PC-9 (cell line): ENCODE measurements at regions of chrX and their contacts with region 1.

Region 1: GRCh38 chrX:116204932-116205331 is 34.4 kb downstream of the AGTR2 start:
- DNase-seq: no peak
- H3K4me3 ChIP-seq: no peak overlapping the region
- H3K27ac ChIP-seq: no peak overlapping the region
- H3K4me1 ChIP-seq: no peaks in the 10 kb centered on the region
- H3K27me3 ChIP-seq: no peaks in the 10 kb centered on the region
- CTCF ChIP-seq: peak; percentile 97

Region 2: DNA sequence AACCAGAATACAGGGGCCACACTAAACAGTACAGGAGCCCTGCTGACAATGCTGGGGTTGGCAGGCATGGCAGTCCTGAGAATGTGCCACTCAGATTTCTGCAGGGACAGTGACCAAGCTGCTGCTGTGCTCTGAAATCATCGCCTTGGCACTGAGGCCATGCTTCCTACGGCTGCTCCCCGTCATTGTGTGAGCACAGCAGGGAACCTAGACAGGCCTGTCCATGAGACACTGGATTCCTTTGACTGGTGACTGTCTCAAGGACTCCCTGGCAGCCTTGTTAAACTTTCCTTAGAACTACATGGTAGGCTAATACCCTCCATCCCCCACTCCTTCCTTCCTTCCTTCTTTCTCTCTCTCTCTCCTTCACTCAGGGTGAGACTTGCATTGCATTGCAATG is 804.0 kb before region 1 on chrX:
- CTCF ChIA-PET with region 1: no interaction called
- POLR2A ChIA-PET with region 1: no interaction called
- intact Hi-C with region 1: no loop called
- DNase-seq: peak in 1 of 2 experiments; percentile 16
- H3K4me3 ChIP-seq: no peak overlapping the region
- H3K27ac ChIP-seq: no peak overlapping the region
- H3K4me1 ChIP-seq: no peaks in the 10 kb centered on the region
- H3K27me3 ChIP-seq: no peaks in the 10 kb centered on the region
- CTCF ChIP-seq: no peak

Region 3: GRCh38 chrX:116194649-116195048 is 10.3 kb before region 1 on chrX:
- CTCF ChIA-PET with region 1: no interaction called
- POLR2A ChIA-PET with region 1: no interaction called
- intact Hi-C with region 1: no loop called
- DNase-seq: no peak
- H3K4me3 ChIP-seq: no peak overlapping the region
- H3K27ac ChIP-seq: no peak overlapping the region
- H3K4me1 ChIP-seq: no peaks in the 10 kb centered on the region
- H3K27me3 ChIP-seq: no peaks in the 10 kb centered on the region
- CTCF ChIP-seq: no peak

Region 4: GRCh38 chrX:116272328-116272727 is 67.4 kb after region 1 on chrX:
- CTCF ChIA-PET with region 1: no interaction called
- POLR2A ChIA-PET with region 1: no interaction called
- intact Hi-C with region 1: loop called (anchors 2 kb)
- DNase-seq: peak; percentile 61 to 95
- H3K4me3 ChIP-seq: 0 out of 2 replicates have a peak overlapping the region, but pooled peaks have one; percentile 16
- H3K27ac ChIP-seq: peak overlapping the region; percentile 95
- H3K4me1 ChIP-seq: peaks cover 20% of the 10 kb centered on the region
- H3K27me3 ChIP-seq: no peaks in the 10 kb centered on the region
- CTCF ChIP-seq: no peak

Region 5: DNA sequence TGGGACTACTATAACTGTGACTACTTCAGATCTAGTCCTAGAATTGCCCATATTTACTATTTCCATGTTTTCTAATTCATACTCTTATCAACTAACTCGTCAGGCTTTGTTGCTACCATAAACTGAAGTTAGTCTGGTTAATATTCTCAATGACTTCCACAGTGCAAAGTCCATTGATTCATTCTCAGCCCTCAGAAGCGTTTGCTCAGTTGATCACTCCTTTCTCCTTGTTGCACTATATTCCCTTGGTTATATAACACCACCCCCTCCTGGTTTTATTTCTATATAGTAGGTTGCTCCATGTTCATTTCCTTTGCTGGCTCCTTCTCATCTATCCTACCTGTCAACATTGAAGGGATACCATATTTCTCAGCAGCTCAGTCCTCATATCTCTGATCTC is 204.3 kb after region 1 on chrX:
- CTCF ChIA-PET with region 1: no interaction called
- POLR2A ChIA-PET with region 1: no interaction called
- intact Hi-C with region 1: no loop called
- DNase-seq: no peak
- H3K4me3 ChIP-seq: no peak overlapping the region
- H3K27ac ChIP-seq: no peak overlapping the region
- H3K4me1 ChIP-seq: no peaks in the 10 kb centered on the region
- H3K27me3 ChIP-seq: no peaks in the 10 kb centered on the region
- CTCF ChIP-seq: no peak

Region 6: DNA sequence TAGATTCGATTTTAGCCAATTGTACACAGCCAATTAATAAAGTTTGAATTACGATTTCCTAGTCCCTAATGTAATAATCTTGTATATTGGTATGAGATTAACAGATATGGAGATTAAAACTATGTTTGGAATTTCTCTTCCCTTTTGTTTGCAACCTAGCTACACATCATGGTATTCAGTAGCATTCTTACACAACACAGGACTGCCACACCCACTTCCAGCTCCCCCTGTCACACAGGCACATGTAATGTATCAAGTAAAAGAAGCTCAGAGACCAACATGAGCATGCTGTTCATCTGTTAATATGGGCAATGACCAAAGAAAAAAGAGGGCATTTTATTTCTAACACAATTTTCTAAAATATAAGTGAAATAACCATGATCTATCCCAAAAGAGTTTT is 244.2 kb after region 1 on chrX:
- CTCF ChIA-PET with region 1: no interaction called
- POLR2A ChIA-PET with region 1: no interaction called
- intact Hi-C with region 1: loop called (anchors 5 kb)
- DNase-seq: peak; percentile 30 to 47
- H3K4me3 ChIP-seq: no peak overlapping the region
- H3K27ac ChIP-seq: no peak overlapping the region
- H3K4me1 ChIP-seq: no peaks in the 10 kb centered on the region
- H3K27me3 ChIP-seq: no peaks in the 10 kb centered on the region
- CTCF ChIP-seq: no peak

Region 7: DNA sequence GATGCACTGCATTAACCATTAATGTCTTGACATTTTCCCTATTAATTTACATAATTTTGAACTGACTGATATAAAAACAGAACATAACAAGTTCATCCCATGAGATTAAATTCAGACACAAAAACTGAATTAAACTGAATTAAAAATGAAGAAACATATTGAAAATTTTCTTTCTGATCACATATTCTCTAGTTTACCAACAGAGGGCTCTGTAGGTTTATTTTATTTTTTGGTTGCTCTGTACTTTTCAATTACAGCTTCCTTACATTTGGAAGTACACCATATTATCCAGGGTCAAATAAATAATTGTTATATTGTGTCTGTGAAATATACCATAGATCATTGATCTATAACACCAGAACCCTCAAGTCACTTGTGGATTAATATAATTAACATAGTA is 285.2 kb after region 1 on chrX:
- CTCF ChIA-PET with region 1: no interaction called
- POLR2A ChIA-PET with region 1: no interaction called
- intact Hi-C with region 1: loop called (anchors 5 kb)
- DNase-seq: no peak
- H3K4me3 ChIP-seq: no peak overlapping the region
- H3K27ac ChIP-seq: no peak overlapping the region
- H3K4me1 ChIP-seq: no peaks in the 10 kb centered on the region
- H3K27me3 ChIP-seq: no peaks in the 10 kb centered on the region
- CTCF ChIP-seq: peak; percentile 69

Region 8: DNA sequence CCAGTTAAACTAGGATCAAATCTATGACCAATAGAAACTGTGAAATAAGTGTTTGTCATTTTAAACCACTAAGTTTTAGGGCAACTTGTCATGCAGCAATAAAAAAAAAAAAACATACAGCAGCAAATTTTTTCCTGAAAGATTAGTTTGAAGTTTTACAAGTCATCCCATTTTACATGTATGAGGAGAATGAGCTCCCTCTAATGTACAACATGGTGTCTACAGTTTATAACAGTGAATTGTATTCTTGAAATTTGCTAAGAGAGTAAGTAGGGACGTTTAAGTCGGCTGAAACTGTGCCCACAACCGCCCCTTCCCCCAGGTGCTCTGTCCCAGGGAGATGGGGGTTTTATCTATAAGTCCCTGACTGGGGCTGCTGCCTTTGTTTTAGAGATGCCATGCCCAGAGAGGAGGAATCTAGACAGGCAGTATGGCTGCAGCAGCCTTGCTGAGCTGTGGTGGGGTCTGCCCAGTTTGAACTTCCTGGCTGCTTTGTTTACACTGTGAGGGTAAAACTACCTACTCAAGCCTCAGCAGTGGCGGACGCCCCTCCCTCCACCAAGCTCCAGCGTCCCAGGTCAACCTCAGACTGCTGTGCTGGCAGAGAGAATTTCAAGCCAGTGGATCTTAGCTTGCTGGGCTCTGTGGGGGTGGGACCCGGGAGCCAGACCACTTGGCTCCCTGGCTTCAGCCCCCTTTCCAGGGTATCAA is 757.1 kb after region 1 on chrX:
- CTCF ChIA-PET with region 1: no interaction called
- POLR2A ChIA-PET with region 1: no interaction called
- intact Hi-C with region 1: loop called (anchors 1 kb)
- DNase-seq: no peak
- H3K4me3 ChIP-seq: no peak overlapping the region
- H3K27ac ChIP-seq: no peak overlapping the region
- H3K4me1 ChIP-seq: no peaks in the 10 kb centered on the region; the same call in 1 of the 2 replicates
- H3K27me3 ChIP-seq: no peaks in the 10 kb centered on the region
- CTCF ChIP-seq: peak; percentile 60